Activated naive CD4-positive, alpha-beta T cell treated with anti-CD3 and anti-CD28 coated beads for 36 hours (primary cell): ENCODE measurements at regions of chr3 and their contacts with region 1.

Region 1: DNA sequence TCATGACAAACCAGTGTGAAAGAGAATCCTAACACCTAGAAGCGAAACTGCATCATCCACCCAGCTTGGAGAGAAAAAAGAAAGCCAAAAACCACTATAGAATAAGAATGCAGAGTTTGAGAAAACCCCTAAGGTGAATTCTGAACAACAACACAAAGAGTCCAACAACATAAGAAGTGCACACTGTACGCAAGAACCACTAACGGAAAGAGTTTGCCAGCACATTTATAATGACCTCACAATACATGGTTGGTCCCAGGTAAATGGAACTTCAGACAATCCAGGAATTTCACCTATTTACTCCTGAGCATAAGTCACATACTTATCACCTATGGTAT is 128.3 kb upstream of the BHLHE40 start:
- DNase-seq: peak; percentile 64
- H3K4me3 Mint-ChIP-seq: peak overlapping the region; percentile 38
- H3K27ac Mint-ChIP-seq: peak overlapping the region; percentile 94
- H3K4me1 Mint-ChIP-seq: peaks cover 84% of the 10 kb centered on the region
- H3K27me3 Mint-ChIP-seq: no peaks in the 10 kb centered on the region

Region 2: DNA sequence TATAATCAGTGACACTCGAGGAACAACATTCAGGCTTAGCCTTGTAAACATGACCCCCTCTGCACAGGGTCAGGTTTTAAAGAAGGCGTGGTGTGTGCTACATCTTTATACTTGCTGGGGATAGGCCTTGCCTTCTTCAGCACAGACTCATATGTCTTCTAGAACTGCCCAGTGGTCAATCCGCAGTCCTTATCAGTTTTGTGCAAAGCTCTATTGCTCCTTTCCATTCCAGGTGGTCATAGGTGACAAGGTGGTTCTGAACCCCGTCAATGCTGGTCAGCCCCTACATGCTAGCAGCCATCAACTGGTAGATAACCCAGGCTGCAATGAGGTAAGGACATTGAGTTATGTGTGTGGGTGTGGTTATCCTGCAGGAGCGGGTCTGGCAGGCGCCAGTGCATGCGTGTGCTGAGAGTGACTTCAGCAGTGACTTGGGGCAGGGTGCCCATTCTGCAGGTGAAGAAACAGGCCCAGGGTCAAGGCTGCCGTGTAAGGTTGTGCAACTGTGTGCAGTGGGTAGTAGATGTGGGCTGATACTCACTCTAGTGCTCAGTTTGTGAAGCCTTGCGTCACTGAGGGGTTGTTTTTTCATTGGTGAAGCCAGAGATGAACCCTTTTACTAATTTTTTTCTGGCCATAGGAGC is 206.9 kb before region 1 on chr3:
- CTCF ChIA-PET with region 1: no interaction called
- intact Hi-C with region 1: no loop called
- DNase-seq: no peak
- H3K4me3 Mint-ChIP-seq: no peak overlapping the region
- H3K27ac Mint-ChIP-seq: no peak overlapping the region
- H3K4me1 Mint-ChIP-seq: peaks cover 20% of the 10 kb centered on the region
- H3K27me3 Mint-ChIP-seq: no peaks in the 10 kb centered on the region

Region 3: GRCh38 chr3:4722103-4722502 is 128.8 kb before region 1 on chr3:
- CTCF ChIA-PET with region 1: interaction called, 3 read pairs
- intact Hi-C with region 1: loop called (anchors 1 kb)
- DNase-seq: peak; percentile 53
- H3K4me3 Mint-ChIP-seq: no peak overlapping the region
- H3K27ac Mint-ChIP-seq: peak overlapping the region; percentile 30
- H3K4me1 Mint-ChIP-seq: peaks cover 6% of the 10 kb centered on the region
- H3K27me3 Mint-ChIP-seq: no peaks in the 10 kb centered on the region

Region 4: DNA sequence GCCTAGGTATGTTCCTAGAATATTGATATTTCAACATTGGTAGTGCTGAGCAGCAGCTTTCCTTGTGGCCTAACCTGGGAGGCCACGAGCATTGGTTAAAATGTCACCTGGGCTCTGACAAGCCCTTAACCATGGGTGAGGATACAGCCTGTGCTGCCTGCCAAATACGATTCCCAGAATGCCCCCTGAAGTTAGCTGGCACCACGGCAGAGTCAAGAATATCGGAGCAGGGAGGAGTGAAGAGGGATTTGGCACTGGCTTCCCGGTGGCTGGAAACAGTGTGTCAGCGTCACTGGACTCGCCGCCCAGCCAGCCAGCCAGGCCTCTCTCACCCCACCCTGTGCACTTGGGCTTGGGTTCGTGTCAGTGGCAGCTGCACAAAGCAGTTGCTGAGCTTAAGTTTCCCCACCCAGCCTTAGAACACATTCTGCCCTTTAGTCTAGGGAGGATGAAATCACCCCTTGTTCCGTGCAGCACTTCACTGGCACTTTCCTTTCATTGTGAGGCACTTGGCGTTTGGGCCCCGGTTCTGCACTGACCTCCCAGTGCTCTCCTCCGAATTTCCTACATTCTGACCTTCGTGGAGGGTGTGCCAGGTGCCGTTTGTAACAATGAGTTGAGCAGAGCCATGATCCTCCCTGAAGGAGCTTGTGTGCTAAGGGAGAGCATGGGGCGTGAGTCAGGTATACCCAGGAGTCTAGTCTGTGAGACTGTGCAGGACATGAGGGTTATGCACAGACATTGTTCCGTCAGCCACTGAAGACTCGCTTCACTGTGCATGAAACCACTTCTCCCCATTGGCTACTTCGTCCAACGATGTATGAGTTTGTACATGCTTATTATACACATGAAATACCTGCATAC is 24.4 kb before region 1 on chr3:
- CTCF ChIA-PET with region 1: interaction called, 9 read pairs
- intact Hi-C with region 1: loop called (anchors 1 kb)
- DNase-seq: no peak
- H3K4me3 Mint-ChIP-seq: no peak overlapping the region
- H3K27ac Mint-ChIP-seq: peak overlapping the region; percentile 57
- H3K4me1 Mint-ChIP-seq: peaks cover 93% of the 10 kb centered on the region
- H3K27me3 Mint-ChIP-seq: no peaks in the 10 kb centered on the region

Region 5: DNA sequence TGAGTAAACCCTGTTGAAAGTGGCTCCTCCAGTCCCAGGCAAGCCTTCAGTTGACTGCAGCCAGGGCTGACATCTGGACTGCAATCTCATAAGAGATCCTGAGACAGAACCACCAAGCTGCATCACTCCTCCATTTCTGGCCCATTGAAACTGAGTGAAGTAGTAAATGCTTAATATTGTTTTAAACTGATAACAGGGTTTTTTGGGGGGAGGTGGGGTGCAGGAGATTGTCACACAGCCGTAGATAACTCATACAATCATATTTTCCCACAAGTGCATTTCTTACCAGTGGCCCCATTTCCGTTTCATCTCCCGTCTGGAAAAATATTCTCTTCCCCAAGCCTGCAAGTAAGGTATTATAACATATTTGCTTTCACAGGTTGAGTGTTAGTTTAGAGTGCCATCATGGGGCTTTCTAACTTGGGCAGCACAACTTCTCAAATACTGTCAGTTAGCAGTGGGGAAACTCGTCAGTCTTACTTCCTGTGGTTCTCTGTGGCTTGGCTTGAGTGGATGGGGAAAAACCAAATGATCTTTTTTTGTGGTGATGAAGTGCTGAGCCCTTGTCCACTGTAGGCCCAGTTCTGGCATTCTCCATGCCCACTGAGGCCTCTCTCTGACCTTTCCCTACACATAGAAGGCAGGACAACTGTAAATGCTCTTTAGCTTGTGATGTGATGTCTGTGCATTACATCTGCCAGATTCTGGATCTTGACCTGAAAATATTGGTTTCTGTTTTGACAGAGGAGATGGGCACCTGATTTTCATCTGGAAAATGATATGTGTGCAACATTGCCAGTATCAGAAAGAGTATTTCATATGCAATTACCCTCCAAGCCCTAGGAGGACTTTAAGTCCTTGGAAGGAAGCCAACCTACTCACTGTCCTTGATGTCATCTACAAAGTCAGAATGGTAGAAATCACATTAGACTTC is 38.3 kb after region 1 on chr3:
- CTCF ChIA-PET with region 1: no interaction called
- intact Hi-C with region 1: loop called (anchors 1 kb)
- DNase-seq: peak; percentile 61
- H3K4me3 Mint-ChIP-seq: no peak overlapping the region
- H3K27ac Mint-ChIP-seq: peak overlapping the region; percentile 85
- H3K4me1 Mint-ChIP-seq: peaks cover 40% of the 10 kb centered on the region
- H3K27me3 Mint-ChIP-seq: no peaks in the 10 kb centered on the region

Region 6: GRCh38 chr3:4943553-4943952 is 92.7 kb after region 1 on chr3:
- CTCF ChIA-PET with region 1: no interaction called
- intact Hi-C with region 1: no loop called
- DNase-seq: no peak
- H3K4me3 Mint-ChIP-seq: no peak overlapping the region
- H3K27ac Mint-ChIP-seq: no peak overlapping the region
- H3K4me1 Mint-ChIP-seq: no peaks in the 10 kb centered on the region
- H3K27me3 Mint-ChIP-seq: no peaks in the 10 kb centered on the region

Region 7: GRCh38 chr3:5006755-5007202 is 155.9 kb after region 1 on chr3:
- CTCF ChIA-PET with region 1: no interaction called
- intact Hi-C with region 1: loop called (anchors 1 kb)
- DNase-seq: peak; percentile 95
- H3K4me3 Mint-ChIP-seq: peak overlapping the region; percentile 44
- H3K27ac Mint-ChIP-seq: peak overlapping the region; percentile 76
- H3K4me1 Mint-ChIP-seq: peaks cover 42% of the 10 kb centered on the region
- H3K27me3 Mint-ChIP-seq: peaks cover 7% of the 10 kb centered on the region

Region 8: GRCh38 chr3:5194341-5195159 is 343.7 kb after region 1 on chr3:
- CTCF ChIA-PET with region 1: no interaction called
- intact Hi-C with region 1: loop called (anchors 1 kb)
- DNase-seq: peak; percentile 66
- H3K4me3 Mint-ChIP-seq: peak overlapping the region; percentile 25
- H3K27ac Mint-ChIP-seq: peak overlapping the region; percentile 98
- H3K4me1 Mint-ChIP-seq: peaks cover 84% of the 10 kb centered on the region
- H3K27me3 Mint-ChIP-seq: no peaks in the 10 kb centered on the region